ENCODE measurements at regions of chr10 and their contacts with region 1.

Region 1: DNA sequence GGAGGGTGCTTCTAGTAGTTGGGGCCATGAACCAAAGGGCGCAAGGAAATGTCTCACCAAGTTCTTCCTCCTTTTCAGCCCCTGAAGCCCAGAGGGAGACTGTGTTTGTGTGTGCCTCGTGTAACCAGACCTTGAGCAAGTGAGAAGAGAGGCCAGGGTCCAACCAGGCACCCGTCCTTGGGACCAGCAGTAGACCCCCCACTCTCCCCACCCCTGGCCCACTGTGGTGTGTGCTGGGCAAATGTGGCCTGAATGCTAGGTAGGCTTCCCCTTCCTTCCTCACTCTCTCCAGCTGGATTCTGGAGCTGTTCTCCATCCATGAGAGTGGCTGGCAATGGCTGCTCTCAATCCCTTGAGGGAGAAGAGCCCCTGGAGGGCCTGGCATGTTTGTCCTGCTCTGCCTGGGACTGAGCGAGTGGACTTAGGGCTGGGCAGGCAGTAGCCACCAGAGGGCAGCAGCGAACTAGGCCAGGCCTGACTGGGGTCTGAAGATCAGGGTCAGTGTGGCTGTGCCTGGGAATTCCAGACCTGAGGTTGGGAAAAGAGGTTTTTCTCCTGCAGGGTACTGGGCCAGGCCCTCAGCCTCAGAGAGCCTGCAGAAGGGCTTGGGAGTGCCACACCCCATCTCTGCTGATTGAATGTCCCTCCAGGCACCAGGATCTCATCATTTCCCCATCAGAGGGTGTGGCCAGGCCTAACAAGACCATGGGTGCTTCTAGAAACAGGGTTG is 12.5 kb downstream of the SFRP5 start:
- DNase-seq: no peak
- H3K4me3 ChIP-seq: no peak overlapping the region
- CTCF ChIP-seq: peak; percentile 96

Region 2: GRCh38 chr10:97508342-97508741 is 251.0 kb before region 1 on chr10:
- CTCF ChIA-PET with region 1: no interaction called
- POLR2A ChIA-PET with region 1: no interaction called
- DNase-seq: no peak
- H3K4me3 ChIP-seq: no peak overlapping the region
- CTCF ChIP-seq: no peak

Region 3: DNA sequence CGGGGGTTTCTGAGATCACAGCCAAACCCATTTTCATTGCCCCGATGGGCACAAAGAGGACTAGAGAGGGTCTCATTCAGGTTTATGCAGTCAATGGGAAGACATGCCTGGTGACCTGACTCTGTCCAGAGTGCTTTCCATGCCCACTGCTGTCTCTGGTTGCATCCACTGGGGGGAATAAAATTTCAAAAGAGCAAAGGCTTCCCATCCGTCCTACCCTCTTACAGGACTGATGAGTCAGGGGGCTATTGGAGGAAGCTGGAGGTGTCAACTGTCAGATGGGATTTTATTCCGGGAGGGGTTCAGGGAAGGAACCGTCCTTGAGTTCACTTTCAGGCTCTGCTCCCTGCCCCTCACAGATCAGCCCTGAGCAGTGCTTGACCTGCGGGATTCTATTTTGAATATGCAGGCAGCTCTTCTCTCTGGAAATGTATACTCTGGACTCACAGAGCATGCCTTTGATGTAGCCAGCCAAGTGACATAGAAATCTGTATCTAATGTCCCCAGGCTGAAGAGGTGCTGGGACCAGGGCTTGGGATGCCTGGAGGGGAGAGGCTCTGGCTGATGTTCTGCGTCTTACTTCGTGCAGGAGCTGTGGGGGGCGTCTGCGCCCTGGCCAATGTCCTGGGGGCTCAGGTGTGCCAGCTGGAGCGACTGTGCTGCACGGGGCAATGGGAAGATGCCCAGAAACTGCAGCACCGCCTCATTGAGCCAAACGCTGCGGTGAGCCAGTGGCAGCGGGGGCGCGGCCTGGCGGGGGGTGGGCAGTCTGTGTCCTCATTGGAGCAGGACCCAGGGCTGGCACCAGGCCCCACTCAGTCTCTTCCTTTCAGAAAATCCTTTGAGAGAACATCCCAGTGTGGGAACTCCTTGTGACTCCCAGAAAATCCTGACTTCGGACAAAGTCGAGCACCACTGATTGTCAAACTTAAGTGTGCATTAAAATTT is 157.8 kb before region 1 on chr10:
- CTCF ChIA-PET with region 1: no interaction called
- POLR2A ChIA-PET with region 1: no interaction called
- DNase-seq: no peak
- H3K4me3 ChIP-seq: no peak overlapping the region
- CTCF ChIP-seq: no peak

Region 4: GRCh38 chr10:97743169-97743943 is 16.0 kb before region 1 on chr10:
- CTCF ChIA-PET with region 1: interaction called, 12 read pairs
- POLR2A ChIA-PET with region 1: no interaction called
- DNase-seq: no peak
- H3K4me3 ChIP-seq: no peak overlapping the region
- CTCF ChIP-seq: no peak

Region 5: GRCh38 chr10:97869091-97870042 is 110.0 kb after region 1 on chr10:
- CTCF ChIA-PET with region 1: interaction called, 67 read pairs
- POLR2A ChIA-PET with region 1: no interaction called
- DNase-seq: no peak
- H3K4me3 ChIP-seq: no peak overlapping the region
- CTCF ChIP-seq: peak; percentile 71

Measured in AG04449 (cell line).